GM10248 (cell line): ENCODE measurements at regions of chr6 and their contacts with region 1.

Region 1: DNA sequence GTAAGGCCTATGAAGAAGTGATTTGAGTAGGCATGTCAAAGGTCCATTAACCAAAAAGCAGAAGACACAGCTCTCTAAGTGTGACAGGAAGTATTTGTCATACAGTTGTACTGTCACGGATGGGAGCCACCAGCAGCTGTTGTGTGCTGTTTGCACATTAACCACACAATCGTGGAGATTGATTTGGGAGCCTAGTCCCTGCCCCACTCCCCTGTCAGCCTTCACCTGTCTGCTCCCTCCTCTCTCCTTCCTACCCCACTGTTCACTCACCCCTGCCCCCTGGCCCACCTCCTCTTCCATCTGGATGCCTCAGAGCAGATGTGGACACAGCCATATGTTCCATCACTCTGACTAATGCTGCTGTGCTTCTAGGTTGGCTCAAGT is 124.7 kb upstream of the SPACA1 start:
- DNase-seq: peak; percentile 69
- CTCF ChIP-seq: no peak

Region 2: DNA sequence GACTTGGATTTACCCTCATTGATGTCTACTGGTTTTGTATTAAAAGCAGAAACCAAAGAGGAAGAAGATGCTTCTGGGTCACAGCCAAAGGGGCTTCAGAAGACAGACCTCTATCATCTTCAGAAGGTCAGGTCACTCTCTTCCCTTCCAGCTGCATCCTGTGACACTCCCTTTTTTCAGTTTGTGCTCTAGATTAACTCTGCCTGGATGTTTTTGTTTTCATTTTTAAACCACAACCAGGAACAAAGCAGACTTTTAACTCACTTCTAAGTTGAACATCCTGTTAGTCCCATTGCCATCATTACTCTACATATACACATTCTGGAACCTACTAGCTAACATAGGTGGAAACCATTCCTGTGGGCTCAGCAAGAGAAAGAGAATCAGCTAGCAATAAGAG is 266.1 kb before region 1 on chr6:
- CTCF ChIA-PET with region 1: no interaction called
- POLR2A ChIA-PET with region 1: no interaction called
- DNase-seq: no peak
- CTCF ChIP-seq: no peak

Region 3: GRCh38 chr6:87907521-87907920 is 15.4 kb before region 1 on chr6:
- CTCF ChIA-PET with region 1: interaction called, 18 read pairs
- POLR2A ChIA-PET with region 1: no interaction called
- DNase-seq: no peak
- CTCF ChIP-seq: no peak